A549 (cell line): ENCODE measurements at regions of chr3 and their contacts with region 1.

Region 1: DNA sequence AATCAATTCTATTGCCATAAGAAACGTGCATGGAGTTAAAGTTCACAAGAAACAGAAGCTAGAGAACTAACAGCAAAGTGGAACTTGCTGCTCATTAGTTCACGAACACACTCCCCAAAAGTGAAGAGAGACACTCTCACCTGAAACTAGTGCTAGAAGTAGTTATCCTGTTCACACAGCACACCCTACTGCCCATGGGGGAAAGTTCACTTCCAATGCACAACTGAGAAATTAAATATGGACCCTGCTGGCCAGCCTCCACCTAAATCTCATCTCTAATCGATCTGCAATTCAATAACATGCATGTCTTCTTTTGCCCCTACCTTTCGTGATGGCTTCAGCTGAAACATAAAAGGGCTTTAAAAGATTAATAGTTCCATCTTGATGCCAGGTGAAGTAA is 39.4 kb upstream of the FRMD4B start:
- DNase-seq: peak; percentile 7 to 32
- ATAC-seq: peak; percentile 86 to 89
- H3K4me3 ChIP-seq: no peak overlapping the region
- H3K27ac ChIP-seq: no peak overlapping the region
- H3K4me1 ChIP-seq: no peaks in the 10 kb centered on the region
- CTCF ChIP-seq: peak; percentile 48
- EP300 ChIP-seq: no peak
- POLR2A ChIP-seq: no peak
- RAD21 ChIP-seq: peak; percentile 58 to 59

Region 2: DNA sequence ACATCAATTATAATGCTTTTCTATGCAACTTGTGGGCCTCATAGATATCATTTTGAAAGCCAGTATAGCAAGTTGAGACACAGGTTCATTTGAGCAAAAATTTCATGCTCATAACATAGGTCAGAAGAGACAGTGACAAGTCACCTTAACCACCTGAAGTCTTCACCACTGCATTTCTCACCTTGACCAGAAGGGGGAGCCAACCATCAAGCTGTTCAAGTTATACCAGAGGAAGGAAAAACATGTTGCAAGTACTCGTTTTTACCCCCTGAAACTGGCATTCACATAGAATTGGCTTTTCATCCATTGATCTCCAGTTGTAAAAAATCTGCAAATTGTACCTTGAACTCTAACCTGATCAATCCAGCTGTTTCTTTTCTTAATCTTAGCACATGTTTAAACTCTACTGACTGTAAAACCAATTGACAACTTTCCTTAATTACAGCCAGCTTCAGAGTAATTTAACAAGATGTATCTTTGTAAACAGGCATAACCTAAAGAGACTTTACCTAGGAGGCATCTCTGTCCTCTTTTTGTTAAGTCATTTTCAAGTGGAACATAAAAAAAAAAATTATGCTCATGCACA is 304.3 kb before region 1 on chr3:
- CTCF ChIA-PET with region 1: interaction called, 11 read pairs
- POLR2A ChIA-PET with region 1: no interaction called
- DNase-seq: peak; percentile 21 to 85
- ATAC-seq: peak; percentile 64 to 84; a peak in 5 of 6 replicates
- H3K4me3 ChIP-seq: no peak overlapping the region
- H3K27ac ChIP-seq: no peak overlapping the region
- H3K4me1 ChIP-seq: no peaks in the 10 kb centered on the region
- CTCF ChIP-seq: peak; percentile 79
- EP300 ChIP-seq: no peak
- POLR2A ChIP-seq: no peak
- RAD21 ChIP-seq: peak; percentile 72 to 79

Region 3: DNA sequence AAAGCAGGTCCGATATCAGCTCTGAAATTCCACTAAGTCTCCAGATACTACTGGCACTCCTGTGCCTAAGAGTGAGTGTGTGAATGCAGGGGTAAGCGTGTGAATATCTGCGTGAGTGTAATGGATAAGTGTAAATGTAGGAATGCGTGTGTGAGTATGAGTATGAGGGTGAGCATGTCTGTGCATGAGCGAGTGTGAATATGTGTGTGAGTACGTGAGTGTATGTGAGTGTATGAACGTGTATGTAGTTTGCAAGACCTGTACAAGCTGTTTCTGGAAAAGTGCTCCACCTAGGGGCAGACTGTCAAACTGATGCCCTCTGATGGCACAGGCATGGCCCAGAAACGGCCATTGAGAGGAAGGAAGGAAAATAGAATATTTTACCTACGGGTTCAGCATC is 15.0 kb before region 1 on chr3:
- CTCF ChIA-PET with region 1: interaction called, 18 read pairs
- POLR2A ChIA-PET with region 1: no interaction called
- DNase-seq: peak; percentile 21 to 60
- ATAC-seq: peak; percentile 94 to 96
- H3K4me3 ChIP-seq: no peak overlapping the region
- H3K27ac ChIP-seq: no peak overlapping the region
- H3K4me1 ChIP-seq: no peaks in the 10 kb centered on the region
- CTCF ChIP-seq: peak; percentile 51
- EP300 ChIP-seq: no peak
- POLR2A ChIP-seq: no peak
- RAD21 ChIP-seq: peak; percentile 44 to 47; a peak in 4 of 5 replicates

Region 4: DNA sequence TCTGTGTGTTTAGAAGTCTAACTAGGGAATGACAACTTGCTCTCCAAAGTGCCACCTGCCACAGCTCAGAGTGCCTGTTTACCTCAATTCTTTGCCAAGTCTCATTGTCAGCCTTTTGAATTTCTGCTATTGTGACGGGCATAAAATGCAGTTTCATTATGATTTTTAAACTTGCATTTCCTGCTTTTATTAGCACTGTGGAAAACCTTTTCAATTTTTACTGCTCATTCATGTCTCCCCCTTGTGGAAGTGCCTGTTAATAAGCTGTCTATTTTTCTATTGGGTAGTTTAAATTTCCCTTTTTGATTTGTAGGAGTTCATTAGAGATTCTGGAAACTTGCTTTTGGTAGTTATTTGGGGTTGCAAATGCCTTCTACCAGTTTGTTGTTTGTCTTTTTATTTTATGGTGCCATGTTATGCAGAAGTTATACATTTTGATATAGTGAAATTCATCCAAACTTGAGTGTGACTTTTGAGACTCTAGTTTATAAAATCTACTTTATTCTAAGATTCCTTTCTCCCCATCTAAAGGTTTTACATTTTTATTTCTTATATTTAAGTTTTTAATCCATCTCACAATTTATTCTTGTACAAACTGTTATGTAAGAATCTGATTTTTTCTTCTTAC is 14.5 kb after region 1 on chr3:
- CTCF ChIA-PET with region 1: interaction called, 11 read pairs
- POLR2A ChIA-PET with region 1: no interaction called
- DNase-seq: peak in 1 of 2 experiments; percentile 19
- ATAC-seq: no peak
- H3K4me3 ChIP-seq: no peak overlapping the region
- H3K27ac ChIP-seq: no peak overlapping the region
- H3K4me1 ChIP-seq: no peaks in the 10 kb centered on the region
- CTCF ChIP-seq: peak; percentile 41
- EP300 ChIP-seq: no peak
- POLR2A ChIP-seq: no peak
- RAD21 ChIP-seq: peak in 1 of 2 experiments; percentile 27; a peak in 1 of 5 replicates